A673 (cell line): ENCODE measurements at regions of chr14 and their contacts with region 1.

Region 1: DNA sequence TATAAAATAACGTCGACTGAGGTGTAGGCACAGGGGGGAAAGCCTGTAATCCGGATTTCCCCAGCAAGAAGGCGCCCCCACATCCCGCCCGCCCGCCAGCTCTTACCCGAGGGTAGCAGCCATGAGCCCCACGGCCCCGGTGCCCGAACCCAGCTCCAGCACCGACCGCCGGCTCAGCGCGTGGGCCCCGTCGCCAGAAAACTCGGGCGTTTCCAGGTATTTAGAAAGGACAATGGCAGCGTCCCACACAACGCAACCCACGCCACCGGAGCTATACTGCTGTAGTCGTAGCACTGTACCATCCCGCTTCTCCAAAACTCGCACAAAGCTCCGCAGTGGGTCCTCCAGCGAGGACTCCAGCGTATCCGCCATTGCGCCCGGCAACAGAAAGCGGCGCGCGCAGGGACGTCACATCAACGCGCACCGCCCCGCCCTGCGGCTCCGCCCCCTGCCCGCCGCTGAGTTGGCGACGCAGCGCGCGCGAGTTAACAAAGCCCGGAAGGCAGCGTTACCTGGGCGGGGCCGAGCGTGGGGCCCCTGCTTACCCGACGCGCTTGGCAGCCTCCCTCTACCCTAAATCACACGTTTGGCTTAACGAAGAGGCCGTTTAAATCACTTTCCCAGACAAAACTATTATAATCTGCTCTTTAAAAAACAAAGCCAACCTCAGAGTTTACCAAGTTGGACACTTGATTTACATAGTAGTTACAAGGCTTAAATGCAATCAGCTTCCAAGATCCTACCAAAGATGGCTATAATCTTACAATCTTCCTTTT is at the start of gene VCPKMT:
- DNase-seq: peak; percentile 97
- H3K4me3 ChIP-seq: peak within 1 kb of the TSS; percentile 91
- H3K27ac ChIP-seq: peak within 1 kb of the TSS; percentile 92
- H3K4me1 ChIP-seq: peaks cover 16% of the 10 kb centered on the region
- H3K27me3 ChIP-seq: no peaks in the 10 kb centered on the region
- CTCF ChIP-seq: no peak
- total RNA-seq, gene VCPKMT: 11.9 and 14.3 TPM in 2 replicates

Region 2: DNA sequence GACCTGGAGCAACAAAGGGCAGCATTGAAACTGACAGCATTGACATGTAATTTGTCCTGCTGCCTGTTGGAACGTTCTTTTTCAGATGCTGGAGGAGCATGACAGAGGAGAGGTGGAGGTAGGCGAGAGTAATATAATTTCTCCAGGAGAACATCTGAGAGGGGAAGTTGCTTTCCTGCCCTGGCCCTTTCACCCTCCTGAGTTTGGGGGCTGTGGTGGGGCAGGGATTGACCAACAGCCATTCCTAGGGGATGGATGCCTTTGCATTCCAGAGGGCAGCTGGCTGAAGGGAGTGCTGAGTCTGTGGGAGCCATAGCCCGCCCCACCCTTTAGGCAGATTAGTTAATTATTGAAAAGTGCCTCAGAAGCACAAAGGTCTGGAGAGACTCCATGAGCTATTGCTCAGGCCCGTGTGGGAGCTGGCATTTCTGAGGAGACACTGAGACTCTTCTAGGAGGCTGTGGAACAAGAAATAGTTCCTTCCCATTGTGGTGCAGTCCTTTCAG is 150.0 kb before region 1 on chr14:
- CTCF ChIA-PET with region 1: no interaction called
- POLR2A ChIA-PET with region 1: interaction called, 15 read pairs
- intact Hi-C with region 1: no loop called
- DNase-seq: no peak
- H3K4me3 ChIP-seq: no peak overlapping the region
- H3K27ac ChIP-seq: no peak overlapping the region
- H3K4me1 ChIP-seq: peaks cover 11% of the 10 kb centered on the region
- H3K27me3 ChIP-seq: no peaks in the 10 kb centered on the region
- CTCF ChIP-seq: no peak

Region 3: GRCh38 chr14:50231475-50232275 is 115.3 kb after region 1 on chr14 and contains the start of gene SOS2:
- CTCF ChIA-PET with region 1: no interaction called
- POLR2A ChIA-PET with region 1: no interaction called
- intact Hi-C with region 1: loop called (anchors 10 kb)
- DNase-seq: peak; percentile 91
- H3K4me3 ChIP-seq: peak within 1 kb of the TSS; percentile 78
- H3K27ac ChIP-seq: peak within 1 kb of the TSS; percentile 82
- H3K4me1 ChIP-seq: peaks cover 10% of the 10 kb centered on the region
- H3K27me3 ChIP-seq: no peaks in the 10 kb centered on the region
- CTCF ChIP-seq: no peak
- total RNA-seq, gene SOS2: 20.3 and 22.9 TPM in 2 replicates

Region 4: DNA sequence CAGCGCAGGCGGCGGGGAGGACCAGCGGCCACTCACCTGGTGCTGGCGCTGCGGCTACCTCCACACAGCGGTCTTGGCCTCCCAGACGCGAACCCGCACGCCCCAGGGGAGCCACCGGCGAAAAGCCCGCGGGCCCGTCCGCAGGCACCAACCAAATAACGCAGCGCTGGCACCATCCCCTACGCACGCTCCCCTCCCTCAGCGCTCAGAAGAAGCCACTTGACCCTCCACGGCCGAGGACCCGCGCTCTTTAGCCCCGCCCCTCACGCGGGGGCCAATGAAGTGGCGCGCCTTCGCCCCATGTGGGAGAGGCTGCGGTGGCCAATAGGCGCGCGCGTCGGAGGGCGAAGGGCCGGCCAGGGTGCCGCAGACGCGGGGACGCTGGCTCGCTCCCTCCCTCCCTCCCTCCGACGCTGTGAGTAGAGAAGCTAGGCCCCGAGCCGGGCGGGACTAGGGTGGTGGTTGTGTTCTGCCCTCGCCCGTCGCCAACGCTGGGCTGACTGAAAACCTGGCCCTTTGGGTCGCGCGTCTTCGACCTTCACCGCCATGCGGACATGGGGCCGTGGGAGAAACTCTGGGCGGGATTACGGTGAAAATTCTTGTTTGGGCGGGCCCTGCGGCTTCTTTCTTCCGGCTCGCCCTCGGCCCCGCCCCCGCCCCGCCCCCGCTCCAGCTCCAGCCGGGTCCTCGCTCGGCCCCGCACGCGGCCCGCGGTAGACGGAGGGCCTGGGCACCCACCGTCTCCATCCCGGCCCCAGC is 195.8 kb after region 1 on chr14 and contains the starts of genes DMAC2L and L2HGDH:
- CTCF ChIA-PET with region 1: no interaction called
- POLR2A ChIA-PET with region 1: no interaction called
- intact Hi-C with region 1: loop called (anchors 1 kb)
- DNase-seq: peak; percentile 98
- H3K4me3 ChIP-seq: peak within 1 kb of the TSS; percentile 85
- H3K27ac ChIP-seq: peak within 1 kb of the TSS; percentile 94
- H3K4me1 ChIP-seq: peaks cover 11% of the 10 kb centered on the region
- H3K27me3 ChIP-seq: no peaks in the 10 kb centered on the region
- CTCF ChIP-seq: no peak
- total RNA-seq, gene DMAC2L: 18.4 and 20.4 TPM in 2 replicates
- total RNA-seq, gene L2HGDH: 17.4 and 22.9 TPM in 2 replicates

Region 5: DNA sequence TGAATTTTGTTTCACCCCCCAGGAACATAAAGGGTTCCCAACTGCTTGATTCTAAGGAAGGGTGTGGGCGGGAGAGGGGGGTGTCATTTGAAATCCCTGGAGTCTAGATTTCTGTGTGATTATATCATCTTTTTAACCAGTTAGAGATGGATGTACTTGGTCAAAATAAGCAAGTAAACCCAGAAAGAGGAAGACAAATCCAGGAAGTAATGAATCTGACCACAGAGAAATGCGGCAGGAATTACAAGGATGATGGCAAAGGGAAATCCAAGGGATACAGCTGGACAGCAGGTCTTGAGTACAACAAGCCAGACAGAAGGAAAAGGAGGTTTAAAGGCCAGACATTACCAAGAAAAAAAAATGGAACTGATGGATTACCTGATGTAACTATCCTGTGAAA is 234.6 kb after region 1 on chr14:
- CTCF ChIA-PET with region 1: no interaction called
- POLR2A ChIA-PET with region 1: no interaction called
- intact Hi-C with region 1: no loop called
- DNase-seq: peak; percentile 17
- H3K4me3 ChIP-seq: no peak overlapping the region
- H3K27ac ChIP-seq: no peak overlapping the region
- H3K4me1 ChIP-seq: no peaks in the 10 kb centered on the region
- H3K27me3 ChIP-seq: no peaks in the 10 kb centered on the region
- CTCF ChIP-seq: no peak

Region 6: GRCh38 chr14:50532502-50533240 is 416.3 kb after region 1 on chr14 and contains the start of gene MAP4K5:
- CTCF ChIA-PET with region 1: no interaction called
- POLR2A ChIA-PET with region 1: no interaction called
- intact Hi-C with region 1: loop called (anchors 5 kb)
- DNase-seq: peak; percentile 95
- H3K4me3 ChIP-seq: peak within 1 kb of the TSS; percentile 91
- H3K27ac ChIP-seq: peak within 1 kb of the TSS; percentile 90
- H3K4me1 ChIP-seq: peaks cover 18% of the 10 kb centered on the region
- H3K27me3 ChIP-seq: no peaks in the 10 kb centered on the region
- CTCF ChIP-seq: peak; percentile 88
- total RNA-seq, gene MAP4K5: 57.9 and 58.9 TPM in 2 replicates